Prostate gland (tissue), 2 donors: ENCODE measurements at regions of chr3 and their contacts with region 1.

Region 1: DNA sequence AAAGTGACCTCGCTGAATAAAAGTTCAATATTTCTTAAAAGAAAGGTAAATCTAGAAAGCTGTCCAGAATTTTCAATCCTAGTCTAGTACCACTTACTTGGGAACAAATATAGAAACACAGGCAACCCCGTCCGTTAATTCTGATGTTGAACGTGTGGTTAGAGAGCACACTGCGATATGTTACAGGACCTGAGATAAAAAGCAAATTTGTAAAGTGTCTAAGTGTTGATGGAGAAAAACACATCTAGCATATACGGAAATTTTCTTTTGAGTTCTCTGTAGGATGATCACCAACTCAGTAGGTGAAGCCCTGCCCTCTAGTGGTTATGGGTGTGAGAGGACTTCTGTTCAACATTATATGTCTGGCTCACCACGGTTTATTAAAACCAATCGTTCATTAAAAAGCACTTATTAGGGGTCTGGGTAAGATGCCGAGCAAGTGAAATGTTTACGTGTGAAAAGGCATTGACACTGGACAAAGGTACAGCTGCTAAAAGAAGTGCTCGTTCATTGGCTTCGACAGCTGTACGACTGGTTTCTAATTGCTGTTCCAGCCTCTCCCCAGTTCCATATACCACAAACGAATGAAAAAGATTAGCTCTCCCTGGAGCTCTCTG is 1.0 kb upstream of the ATP2C1 start:
- DNase-seq: peak; percentile 83
- H3K4me3 ChIP-seq: peak overlapping the region; percentile 66 to 79
- H3K27ac ChIP-seq: peak overlapping the region; percentile 93 to 95
- H3K4me1 ChIP-seq: no peaks in the 10 kb centered on the region
- H3K27me3 ChIP-seq: no peaks in the 10 kb centered on the region
- CTCF ChIP-seq: peak; percentile 71 to 92 (median 87)
- POLR2A ChIP-seq: no peak

Region 2: GRCh38 chr3:130276203-130276803 is 616.6 kb before region 1 on chr3:
- intact Hi-C with region 1: loop called (anchors 10 kb)
- DNase-seq: no peak
- H3K4me3 ChIP-seq: no peak overlapping the region
- H3K27ac ChIP-seq: no peak overlapping the region
- H3K4me1 ChIP-seq: no peaks in the 10 kb centered on the region
- H3K27me3 ChIP-seq: no peaks in the 10 kb centered on the region
- CTCF ChIP-seq: peak; percentile 23 to 66 (median 55)
- POLR2A ChIP-seq: no peak

Region 3: DNA sequence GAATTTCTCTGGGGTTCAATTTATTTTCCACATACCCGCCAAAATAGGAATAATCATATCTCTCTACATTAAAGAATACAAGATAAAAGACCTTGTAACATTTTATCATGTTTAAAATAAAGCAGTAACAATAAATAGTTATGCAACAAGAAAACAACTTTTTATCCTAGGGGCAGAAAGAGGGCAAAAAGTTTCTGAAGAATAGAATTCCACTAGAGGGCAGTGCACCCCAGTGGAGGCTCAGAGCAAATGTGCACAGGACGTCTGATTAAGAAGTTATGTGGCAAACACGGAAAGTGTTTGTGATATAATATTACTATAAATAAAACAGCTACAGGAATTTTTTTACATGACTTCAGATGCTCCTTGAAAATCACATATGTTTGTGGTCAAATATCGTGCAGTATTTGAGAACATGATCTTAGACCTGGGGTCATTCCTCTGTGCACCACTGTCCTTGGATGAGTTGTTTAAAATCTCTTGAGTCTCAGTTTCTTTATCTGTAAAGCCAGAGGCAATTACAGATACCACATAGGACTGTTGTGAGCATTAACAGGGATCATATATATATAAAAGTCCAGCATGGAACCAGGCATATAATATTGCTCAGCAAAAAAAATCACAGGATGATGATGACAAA is 133.0 kb before region 1 on chr3:
- intact Hi-C with region 1: loop called (anchors 1 kb)
- DNase-seq: peak; percentile 62
- H3K4me3 ChIP-seq: no peak overlapping the region
- H3K27ac ChIP-seq: no peak overlapping the region
- H3K4me1 ChIP-seq: no peaks in the 10 kb centered on the region
- H3K27me3 ChIP-seq: no peaks in the 10 kb centered on the region
- CTCF ChIP-seq: peak; percentile 80 to 89 (median 84)
- POLR2A ChIP-seq: no peak

Region 4: GRCh38 chr3:131026321-131027178 is 133.7 kb after region 1 on chr3 and contains the starts of genes ASTE1 and NEK11:
- intact Hi-C with region 1: loop called (anchors 5 kb)
- DNase-seq: peak; percentile 88
- H3K4me3 ChIP-seq: peak within 1 kb of the TSS; percentile 48 to 61
- H3K27ac ChIP-seq: peak within 1 kb of the TSS; percentile 82 to 86
- H3K4me1 ChIP-seq: no peaks in the 10 kb centered on the region
- H3K27me3 ChIP-seq: no peaks in the 10 kb centered on the region
- CTCF ChIP-seq: peak in 1 of 4 experiments; percentile 5
- POLR2A ChIP-seq: peak; percentile 43
- total RNA-seq, gene ASTE1: 6.1 to 7.7 TPM
- total RNA-seq, gene NEK11: 7.4 to 14.0 TPM

Region 5: GRCh38 chr3:131381444-131382291 is 488.8 kb after region 1 on chr3 and contains the start of gene NUDT16:
- intact Hi-C with region 1: loop called (anchors 5 kb)
- DNase-seq: peak; percentile 99
- H3K4me3 ChIP-seq: peak within 1 kb of the TSS; percentile 67 to 99
- H3K27ac ChIP-seq: peak within 1 kb of the TSS; percentile 79 to 90
- H3K4me1 ChIP-seq: no peaks in the 10 kb centered on the region
- H3K27me3 ChIP-seq: no peaks in the 10 kb centered on the region
- CTCF ChIP-seq: peak in 1 of 4 experiments; percentile 4
- POLR2A ChIP-seq: peak; percentile 84
- total RNA-seq, gene NUDT16: 25.2 to 26.0 TPM